ENCODE measurements at regions of chr11 and their contacts with region 1.

Region 1: GRCh38 chr11:17528181-17528691 is 16.0 kb downstream of the USH1C start:
- DNase-seq: peak; percentile 42 to 88
- ATAC-seq: peak; percentile 89 to 97
- H3K4me3 ChIP-seq: no peak overlapping the region
- H3K27ac ChIP-seq: no peak overlapping the region
- H3K4me1 ChIP-seq: peaks cover 6% of the 10 kb centered on the region; the same call in 2 of the 3 replicates
- CTCF ChIP-seq: peak; percentile 79
- EP300 ChIP-seq: no peak
- POLR2A ChIP-seq: no peak
- RAD21 ChIP-seq: peak; percentile 74 to 77

Region 2: GRCh38 chr11:17366495-17366894 is 161.7 kb before region 1 on chr11:
- CTCF ChIA-PET with region 1: interaction called, 10 read pairs
- POLR2A ChIA-PET with region 1: no interaction called
- DNase-seq: no peak
- ATAC-seq: no peak
- H3K4me3 ChIP-seq: no peak overlapping the region
- H3K27ac ChIP-seq: no peak overlapping the region
- H3K4me1 ChIP-seq: no peaks in the 10 kb centered on the region
- CTCF ChIP-seq: no peak
- EP300 ChIP-seq: no peak
- POLR2A ChIP-seq: no peak
- RAD21 ChIP-seq: no peak

Region 3: DNA sequence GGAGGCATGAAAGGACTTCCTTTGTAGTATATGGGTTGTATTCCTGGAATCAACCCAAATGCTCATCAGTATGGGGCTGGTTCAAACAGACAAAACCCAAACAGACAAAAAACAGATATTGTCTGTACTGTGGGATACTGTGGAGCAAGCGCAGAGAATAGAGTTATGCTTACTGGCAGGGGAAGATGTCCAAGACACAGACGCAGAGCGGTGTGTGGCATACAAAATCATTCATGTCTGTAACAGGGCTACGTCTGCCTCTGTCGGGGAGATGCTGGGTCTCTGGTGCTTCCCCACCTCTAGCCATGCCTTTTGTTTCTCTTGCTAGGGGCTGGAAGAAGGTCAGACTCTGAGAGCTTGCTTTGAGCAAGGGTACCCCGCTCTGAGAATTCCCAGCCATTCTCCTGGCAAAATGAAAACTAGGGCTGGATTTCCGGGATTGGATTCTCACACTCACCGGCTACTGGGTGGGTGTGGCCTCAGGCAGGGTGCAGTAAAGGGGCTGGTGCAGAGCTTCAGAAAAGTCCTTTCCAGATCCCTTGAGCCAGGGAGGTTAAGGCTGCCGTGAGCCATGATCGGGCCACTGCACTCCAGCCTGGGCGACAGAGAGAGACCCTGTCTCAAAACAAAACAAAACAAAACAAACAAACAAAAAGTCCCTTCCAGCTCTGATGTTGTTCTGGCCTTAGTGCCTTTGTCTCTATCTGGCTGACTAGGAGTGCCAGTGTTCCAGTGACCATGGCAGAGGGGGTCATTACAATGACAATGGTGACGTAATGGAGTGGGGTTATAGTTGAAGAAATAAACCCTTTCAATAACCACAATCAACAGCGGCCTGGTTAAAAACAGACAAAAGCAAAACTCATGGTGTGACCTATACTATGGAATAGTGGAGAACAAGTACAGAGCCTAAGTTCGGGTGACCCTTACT is 48.7 kb before region 1 on chr11:
- CTCF ChIA-PET with region 1: interaction called, 12 read pairs
- POLR2A ChIA-PET with region 1: no interaction called
- DNase-seq: peak; percentile 24 to 58
- ATAC-seq: peak; percentile 40 to 65; a peak in 4 of 6 replicates
- H3K4me3 ChIP-seq: no peak overlapping the region
- H3K27ac ChIP-seq: no peak overlapping the region
- H3K4me1 ChIP-seq: no peaks in the 10 kb centered on the region
- CTCF ChIP-seq: no peak
- EP300 ChIP-seq: no peak
- POLR2A ChIP-seq: no peak
- RAD21 ChIP-seq: no peak

Region 4: DNA sequence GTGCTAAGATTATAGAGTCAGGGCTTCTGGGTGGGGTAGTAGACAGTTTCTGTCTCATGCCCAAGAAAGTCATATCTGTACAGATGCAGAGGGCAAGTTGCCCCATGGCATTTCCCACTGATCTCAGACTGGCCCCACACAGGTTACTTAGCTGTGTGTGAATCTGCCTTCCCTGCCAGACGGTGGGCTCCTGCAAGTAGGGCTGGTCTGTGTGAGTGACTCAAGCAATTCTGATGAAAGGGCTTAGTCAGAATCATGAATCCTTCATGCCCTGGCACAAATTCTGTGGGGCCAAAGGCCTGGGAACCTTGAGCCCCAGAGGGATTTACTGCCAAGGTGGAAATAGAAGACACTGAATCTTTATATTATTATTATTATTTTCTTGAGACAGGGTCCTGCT is 14.4 kb before region 1 on chr11:
- CTCF ChIA-PET with region 1: interaction called, 281 read pairs
- POLR2A ChIA-PET with region 1: no interaction called
- DNase-seq: no peak
- ATAC-seq: peak; percentile 32 to 43; a peak in 3 of 6 replicates
- H3K4me3 ChIP-seq: no peak overlapping the region
- H3K27ac ChIP-seq: no peak overlapping the region
- H3K4me1 ChIP-seq: peaks cover 3% of the 10 kb centered on the region; the same call in 2 of the 3 replicates
- CTCF ChIP-seq: no peak
- EP300 ChIP-seq: no peak
- POLR2A ChIP-seq: no peak
- RAD21 ChIP-seq: no peak

Region 5: DNA sequence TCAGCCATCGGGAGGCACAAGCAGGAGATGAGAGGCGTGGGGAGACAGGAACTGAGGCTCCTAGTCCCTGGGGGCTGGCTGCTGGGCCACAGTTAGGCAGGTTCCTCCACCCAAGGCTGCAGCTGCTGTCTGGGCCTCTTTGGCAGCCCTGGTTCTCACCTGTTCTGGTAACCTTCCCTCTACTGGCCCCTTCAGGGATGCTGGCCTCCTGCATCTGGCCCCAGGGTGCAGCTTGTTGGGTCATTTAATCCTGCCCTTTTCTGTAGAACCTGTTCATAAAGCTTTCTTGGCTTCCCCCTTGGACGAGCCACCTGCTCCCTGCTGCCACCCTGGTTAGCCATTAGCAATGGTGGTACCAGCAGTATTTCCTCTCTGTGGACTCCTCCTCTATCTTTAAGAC is 10.5 kb after region 1 on chr11:
- CTCF ChIA-PET with region 1: interaction called, 34 read pairs
- POLR2A ChIA-PET with region 1: no interaction called
- DNase-seq: no peak
- ATAC-seq: no peak
- H3K4me3 ChIP-seq: no peak overlapping the region
- H3K27ac ChIP-seq: no peak overlapping the region
- H3K4me1 ChIP-seq: peaks cover 22% of the 10 kb centered on the region
- CTCF ChIP-seq: no peak
- EP300 ChIP-seq: no peak
- POLR2A ChIP-seq: no peak
- RAD21 ChIP-seq: no peak

Region 6: GRCh38 chr11:17544181-17544622 is 16.0 kb after region 1 on chr11 and contains the start of gene USH1C:
- CTCF ChIA-PET with region 1: interaction called, 34 read pairs
- POLR2A ChIA-PET with region 1: no interaction called
- DNase-seq: peak; percentile 44 to 61
- ATAC-seq: peak; percentile 77 to 90
- H3K4me3 ChIP-seq: peak within 1 kb of the TSS; percentile 53
- H3K27ac ChIP-seq: peak within 1 kb of the TSS; percentile 36 to 82
- H3K4me1 ChIP-seq: peaks cover 24% of the 10 kb centered on the region
- CTCF ChIP-seq: no peak
- EP300 ChIP-seq: no peak
- POLR2A ChIP-seq: no peak
- RAD21 ChIP-seq: no peak
- polyA plus RNA-seq, gene USH1C: 8.6 and 10.4 TPM in 2 replicates

Region 7: GRCh38 chr11:17561526-17561925 is 33.3 kb after region 1 on chr11:
- CTCF ChIA-PET with region 1: interaction called, 10 read pairs
- POLR2A ChIA-PET with region 1: interaction called, 3 read pairs
- DNase-seq: no peak
- ATAC-seq: no peak
- H3K4me3 ChIP-seq: no peak overlapping the region
- H3K27ac ChIP-seq: no peak overlapping the region
- H3K4me1 ChIP-seq: no peaks in the 10 kb centered on the region
- CTCF ChIP-seq: no peak
- EP300 ChIP-seq: no peak
- POLR2A ChIP-seq: no peak
- RAD21 ChIP-seq: no peak

Measured in A549 (cell line).